A549 (cell line): ENCODE measurements at regions of chr3 and their contacts with region 1.

Region 1: GRCh38 chr3:51941798-51942602 is at the starts of genes PARP3 and RRP9:
- DNase-seq: peak; percentile 97 to 99
- ATAC-seq: peak; percentile 90 to 95
- H3K4me3 ChIP-seq: peak within 1 kb of the TSS; percentile 92
- H3K27ac ChIP-seq: peak within 1 kb of the TSS; percentile 97 to 100
- H3K4me1 ChIP-seq: peaks cover 21% of the 10 kb centered on the region
- CTCF ChIP-seq: peak; percentile 89
- EP300 ChIP-seq: no peak
- POLR2A ChIP-seq: peak; percentile 76
- RAD21 ChIP-seq: peak; percentile 80 to 91
- polyA plus RNA-seq, gene PARP3: 7.6 and 7.8 TPM in 2 replicates
- polyA plus RNA-seq, gene RRP9: 17.0 TPM in 2 replicates

Region 2: GRCh38 chr3:51908026-51908425 is 34.0 kb before region 1 on chr3:
- CTCF ChIA-PET with region 1: no interaction called
- POLR2A ChIA-PET with region 1: no interaction called
- DNase-seq: no peak
- ATAC-seq: no peak
- H3K4me3 ChIP-seq: no peak overlapping the region
- H3K27ac ChIP-seq: no peak overlapping the region
- H3K4me1 ChIP-seq: no peaks in the 10 kb centered on the region
- CTCF ChIP-seq: no peak
- EP300 ChIP-seq: no peak
- POLR2A ChIP-seq: no peak
- RAD21 ChIP-seq: no peak

Region 3: GRCh38 chr3:51929420-51930003 is 12.5 kb before region 1 on chr3:
- CTCF ChIA-PET with region 1: interaction called, 22 read pairs
- POLR2A ChIA-PET with region 1: no interaction called
- DNase-seq: no peak
- ATAC-seq: peak; percentile 47 to 58; a peak in 3 of 6 replicates
- H3K4me3 ChIP-seq: no peak overlapping the region
- H3K27ac ChIP-seq: no peak overlapping the region
- H3K4me1 ChIP-seq: no peaks in the 10 kb centered on the region
- CTCF ChIP-seq: no peak
- EP300 ChIP-seq: no peak
- POLR2A ChIP-seq: no peak
- RAD21 ChIP-seq: no peak

Region 4: GRCh38 chr3:51955893-51956770 is 14.1 kb after region 1 on chr3:
- CTCF ChIA-PET with region 1: interaction called, 21 read pairs
- POLR2A ChIA-PET with region 1: no interaction called
- DNase-seq: no peak
- ATAC-seq: peak in 1 of 2 experiments; percentile 48; a peak in 3 of 6 replicates
- H3K4me3 ChIP-seq: no peak overlapping the region
- H3K27ac ChIP-seq: no peak overlapping the region
- H3K4me1 ChIP-seq: no peaks in the 10 kb centered on the region; the same call in 1 of the 3 replicates
- CTCF ChIP-seq: no peak
- EP300 ChIP-seq: no peak
- POLR2A ChIP-seq: no peak
- RAD21 ChIP-seq: no peak

Region 5: GRCh38 chr3:51967384-51968169 is 25.6 kb after region 1 on chr3 and contains the start of gene PCBP4:
- CTCF ChIA-PET with region 1: interaction called, 59 read pairs
- POLR2A ChIA-PET with region 1: interaction called, 6 read pairs
- DNase-seq: no peak
- ATAC-seq: peak; percentile 65
- H3K4me3 ChIP-seq: peak within 1 kb of the TSS; percentile 79
- H3K27ac ChIP-seq: peak within 1 kb of the TSS; percentile 91 to 100
- H3K4me1 ChIP-seq: peaks cover 13% of the 10 kb centered on the region
- CTCF ChIP-seq: no peak
- EP300 ChIP-seq: no peak
- POLR2A ChIP-seq: no peak; the same call in none of the 2 replicates
- RAD21 ChIP-seq: no peak
- polyA plus RNA-seq, gene PCBP4: 8.6 and 9.3 TPM in 2 replicates

Region 6: GRCh38 chr3:51974963-51975851 is 33.2 kb after region 1 on chr3 and contains the start of gene ABHD14A:
- CTCF ChIA-PET with region 1: interaction called, 59 read pairs
- POLR2A ChIA-PET with region 1: interaction called, 28 read pairs
- DNase-seq: peak; percentile 55 to 68
- ATAC-seq: peak; percentile 80 to 88
- H3K4me3 ChIP-seq: peak within 1 kb of the TSS; percentile 87
- H3K27ac ChIP-seq: peak within 1 kb of the TSS; percentile 99
- H3K4me1 ChIP-seq: peaks cover 14% of the 10 kb centered on the region
- CTCF ChIP-seq: no peak
- EP300 ChIP-seq: no peak
- POLR2A ChIP-seq: peak; percentile 86
- RAD21 ChIP-seq: no peak
- polyA plus RNA-seq, gene ABHD14A: 6.3 and 7.5 TPM in 2 replicates

Region 7: GRCh38 chr3:51982782-51983577 is 41.0 kb after region 1 on chr3 and contains the start of gene ACY1:
- CTCF ChIA-PET with region 1: interaction called, 16 read pairs
- POLR2A ChIA-PET with region 1: interaction called, 14 read pairs
- DNase-seq: peak; percentile 81 to 84
- ATAC-seq: peak; percentile 71 to 87
- H3K4me3 ChIP-seq: peak within 1 kb of the TSS; percentile 51
- H3K27ac ChIP-seq: peak within 1 kb of the TSS; percentile 80 to 97
- H3K4me1 ChIP-seq: peaks cover 32% of the 10 kb centered on the region
- CTCF ChIP-seq: peak; percentile 6; the same call in 1 of the 3 replicates
- EP300 ChIP-seq: no peak
- POLR2A ChIP-seq: peak; percentile 43
- RAD21 ChIP-seq: no peak
- polyA plus RNA-seq, gene ACY1: 21.1 and 25.1 TPM in 2 replicates

Region 8: DNA sequence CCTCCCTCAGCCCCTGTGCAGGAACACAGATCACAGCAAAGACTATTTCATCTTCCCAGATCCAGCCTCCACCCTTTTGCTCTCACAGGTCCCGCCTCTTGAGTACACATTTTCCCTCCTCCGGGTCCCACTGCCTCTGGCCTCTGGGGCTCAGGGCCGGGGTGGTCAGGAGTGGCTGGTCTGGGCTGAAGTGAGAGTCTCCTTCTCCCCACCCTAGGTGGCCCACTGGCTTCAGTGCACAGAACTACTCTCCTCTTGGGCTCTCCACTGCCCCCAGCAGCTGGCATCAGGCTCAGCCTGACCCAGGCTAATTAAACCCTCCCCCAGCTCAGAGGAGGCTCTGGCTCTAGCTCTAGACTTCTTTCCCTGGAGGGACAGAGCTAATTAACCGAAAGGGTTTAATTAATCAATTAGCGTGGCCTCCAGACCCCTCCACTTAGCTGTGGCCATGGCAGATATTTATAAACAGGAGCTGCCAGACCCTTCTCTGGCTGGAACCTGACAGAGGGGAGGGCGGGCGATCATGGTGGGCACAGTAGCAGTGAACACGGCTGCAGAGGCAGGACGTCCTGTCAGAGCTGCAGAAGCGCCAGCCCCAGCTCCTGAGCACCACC is 99.2 kb after region 1 on chr3:
- CTCF ChIA-PET with region 1: no interaction called
- POLR2A ChIA-PET with region 1: no interaction called
- DNase-seq: no peak
- ATAC-seq: peak; percentile 35 to 73; a peak in 4 of 6 replicates
- H3K4me3 ChIP-seq: no peak overlapping the region
- H3K27ac ChIP-seq: peak overlapping the region in 1 of 2 experiments; percentile 14; a peak in 1 of 6 replicates
- H3K4me1 ChIP-seq: peaks cover 11% of the 10 kb centered on the region
- CTCF ChIP-seq: no peak; the same call in 2 of the 3 replicates
- EP300 ChIP-seq: no peak
- POLR2A ChIP-seq: no peak
- RAD21 ChIP-seq: no peak